GM12878 (cell line): ENCODE measurements at regions of chr6 and their contacts with region 1.

Region 1: DNA sequence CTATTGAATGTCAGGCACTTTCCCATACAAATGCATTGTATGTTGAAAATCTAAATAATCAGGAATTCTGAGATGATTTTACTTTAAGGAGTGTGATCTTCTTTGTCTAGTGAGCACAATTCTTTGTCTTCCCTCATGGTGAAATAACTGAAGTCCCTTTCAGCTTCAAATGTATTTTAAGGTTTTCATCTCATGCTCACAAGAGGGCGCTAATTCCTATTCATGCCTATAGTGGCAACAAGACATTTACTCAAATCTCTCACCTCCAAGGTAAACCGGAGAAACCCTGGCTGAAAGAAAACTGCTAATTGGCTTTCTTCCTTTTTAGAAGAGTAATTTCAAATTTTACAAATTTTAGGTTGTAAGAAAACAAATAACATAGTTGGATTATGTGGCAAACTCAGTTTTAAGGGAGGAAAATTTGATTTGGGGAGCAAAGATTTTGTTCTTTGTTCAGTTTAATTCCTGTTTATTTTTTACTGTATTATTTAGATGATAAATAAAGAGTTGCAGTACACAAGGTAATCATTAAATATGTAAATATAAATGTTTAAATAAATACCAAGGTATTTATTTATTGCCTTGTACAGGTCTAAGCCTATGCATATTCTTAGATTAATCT is 69.1 kb downstream of the SLC35F1 start:
- DNase-seq: no peak
- ATAC-seq: peak; percentile 76
- H3K4me3 ChIP-seq: no peak overlapping the region
- H3K27ac ChIP-seq: no peak overlapping the region
- H3K4me1 ChIP-seq: no peaks in the 10 kb centered on the region
- H3K27me3 ChIP-seq: no peaks in the 10 kb centered on the region
- CTCF ChIP-seq: peak; percentile 61 to 63 (median 62)
- EP300 ChIP-seq: no peak
- POLR2A ChIP-seq: no peak
- RAD21 ChIP-seq: peak; percentile 62

Region 2: GRCh38 chr6:117840541-117840983 is 135.6 kb before region 1 on chr6:
- CTCF ChIA-PET with region 1: no interaction called
- POLR2A ChIA-PET with region 1: no interaction called
- RAD21 ChIA-PET with region 1: interaction called, 3 read pairs
- SMC1A ChIA-PET with region 1: no interaction called
- in situ Hi-C with region 1: no loop called
- intact Hi-C with region 1: loop called (anchors 5 kb)
- DNase-seq: no peak
- ATAC-seq: peak; percentile 70
- H3K4me3 ChIP-seq: no peak overlapping the region
- H3K27ac ChIP-seq: no peak overlapping the region
- H3K4me1 ChIP-seq: no peaks in the 10 kb centered on the region
- H3K27me3 ChIP-seq: no peaks in the 10 kb centered on the region
- CTCF ChIP-seq: peak; percentile 37 to 49 (median 41); a peak in 3 of 6 replicates
- EP300 ChIP-seq: no peak
- POLR2A ChIP-seq: no peak
- RAD21 ChIP-seq: peak; percentile 65

Region 3: DNA sequence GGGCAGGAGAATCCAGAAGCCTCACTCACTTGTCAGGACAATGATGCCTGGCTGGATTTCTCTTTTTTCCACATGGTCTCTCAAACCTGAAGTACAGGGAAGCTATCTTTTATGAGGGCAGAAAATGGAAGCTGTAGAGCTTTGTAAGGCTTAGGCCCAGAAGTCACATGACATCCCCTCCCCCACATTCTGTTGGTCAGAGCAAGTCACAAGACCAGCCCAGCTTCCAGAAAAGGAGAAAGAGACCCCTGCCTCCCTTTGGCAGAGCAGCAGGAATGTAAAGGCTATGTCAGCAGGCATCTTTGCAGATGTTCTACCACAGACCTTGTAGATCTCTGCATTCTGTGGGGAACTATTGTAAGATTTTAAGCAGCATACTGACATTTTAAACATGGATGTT is 176.4 kb after region 1 on chr6:
- CTCF ChIA-PET with region 1: no interaction called
- POLR2A ChIA-PET with region 1: no interaction called
- RAD21 ChIA-PET with region 1: no interaction called
- SMC1A ChIA-PET with region 1: no interaction called
- in situ Hi-C with region 1: no loop called
- intact Hi-C with region 1: no loop called
- DNase-seq: no peak
- ATAC-seq: no peak
- H3K4me3 ChIP-seq: no peak overlapping the region
- H3K27ac ChIP-seq: no peak overlapping the region
- H3K4me1 ChIP-seq: no peaks in the 10 kb centered on the region
- H3K27me3 ChIP-seq: no peaks in the 10 kb centered on the region
- CTCF ChIP-seq: no peak
- EP300 ChIP-seq: no peak
- POLR2A ChIP-seq: no peak
- RAD21 ChIP-seq: no peak

Region 4: DNA sequence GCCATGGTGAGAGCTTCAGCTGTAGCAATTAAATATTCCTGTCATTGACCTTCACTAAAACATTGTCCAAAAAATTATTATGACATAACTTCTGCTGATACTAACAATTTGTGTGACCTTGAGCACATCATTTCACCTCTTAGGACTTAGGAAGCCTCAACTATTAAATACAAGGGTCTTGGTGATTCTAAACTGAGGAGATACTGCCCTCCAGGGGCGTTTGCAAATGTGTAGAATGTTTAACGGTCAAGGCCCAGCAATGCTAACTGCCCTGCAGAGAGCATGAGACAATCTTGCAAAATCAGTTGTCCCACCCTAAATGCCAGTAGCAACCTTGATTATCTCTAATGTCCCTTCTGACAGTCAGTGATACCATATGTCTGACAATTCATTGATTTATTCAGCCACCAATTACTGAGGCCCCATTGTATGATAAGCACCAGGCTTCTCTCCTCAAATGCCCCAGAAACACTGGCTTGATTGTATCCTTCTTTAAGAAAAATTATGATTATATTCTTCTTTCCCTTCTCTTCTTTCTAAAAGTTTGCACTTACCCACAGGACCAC is 287.9 kb after region 1 on chr6:
- CTCF ChIA-PET with region 1: interaction called, 4 read pairs
- POLR2A ChIA-PET with region 1: no interaction called
- RAD21 ChIA-PET with region 1: no interaction called
- SMC1A ChIA-PET with region 1: interaction called, 3 read pairs
- in situ Hi-C with region 1: loop called (anchors 10 kb)
- intact Hi-C with region 1: loop called (anchors 5 kb)
- DNase-seq: no peak
- ATAC-seq: peak; percentile 55
- H3K4me3 ChIP-seq: no peak overlapping the region
- H3K27ac ChIP-seq: no peak overlapping the region
- H3K4me1 ChIP-seq: no peaks in the 10 kb centered on the region
- H3K27me3 ChIP-seq: no peaks in the 10 kb centered on the region
- CTCF ChIP-seq: peak; percentile 21 to 35 (median 30); a peak in 3 of 6 replicates
- EP300 ChIP-seq: no peak
- POLR2A ChIP-seq: no peak
- RAD21 ChIP-seq: peak; percentile 73

Region 5: DNA sequence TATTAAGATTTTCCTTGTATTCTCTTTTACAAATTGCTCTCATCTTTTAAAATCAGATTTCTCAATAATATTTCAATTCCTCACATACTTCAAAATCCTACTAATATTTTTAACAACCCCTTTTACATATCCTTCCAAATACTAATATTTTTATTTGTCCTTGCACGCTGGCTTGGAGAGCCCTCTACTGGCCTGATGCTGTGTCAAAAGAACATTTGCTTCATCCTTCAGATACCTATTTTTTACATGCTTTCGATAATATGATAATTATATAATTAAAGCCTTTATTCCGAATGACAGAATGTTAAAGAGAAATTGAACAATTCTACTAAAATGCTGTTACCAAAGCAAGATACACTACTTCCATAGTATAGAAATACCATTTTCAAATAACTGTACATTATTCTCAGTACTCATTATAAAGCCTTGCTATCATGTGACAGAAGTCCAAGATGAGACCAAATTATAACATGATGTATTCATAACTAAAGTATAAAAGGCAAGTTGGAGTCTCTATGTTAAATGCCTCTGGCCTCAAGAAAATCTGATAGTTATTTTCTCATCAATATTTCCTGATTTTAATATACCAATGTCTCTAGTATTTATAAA is 533.0 kb after region 1 on chr6:
- CTCF ChIA-PET with region 1: no interaction called
- POLR2A ChIA-PET with region 1: no interaction called
- RAD21 ChIA-PET with region 1: interaction called, 3 read pairs
- SMC1A ChIA-PET with region 1: interaction called, 3 read pairs
- in situ Hi-C with region 1: no loop called
- intact Hi-C with region 1: loop called (anchors 2 kb)
- DNase-seq: no peak
- ATAC-seq: 0 out of 3 replicates have a peak, but pooled peaks have one; percentile 34
- H3K4me3 ChIP-seq: no peak overlapping the region
- H3K27ac ChIP-seq: no peak overlapping the region
- H3K4me1 ChIP-seq: no peaks in the 10 kb centered on the region
- H3K27me3 ChIP-seq: no peaks in the 10 kb centered on the region
- CTCF ChIP-seq: peak; percentile 54 to 59 (median 56); a peak in 5 of 6 replicates
- EP300 ChIP-seq: no peak
- POLR2A ChIP-seq: no peak
- RAD21 ChIP-seq: peak; percentile 75

Region 6: GRCh38 chr6:118551063-118552053 is 575.2 kb after region 1 on chr6:
- CTCF ChIA-PET with region 1: interaction called, 10 read pairs
- POLR2A ChIA-PET with region 1: no interaction called
- RAD21 ChIA-PET with region 1: no interaction called
- SMC1A ChIA-PET with region 1: no interaction called
- in situ Hi-C with region 1: no loop called
- intact Hi-C with region 1: loop called (anchors 1 kb)
- DNase-seq: no peak
- ATAC-seq: peak; percentile 93
- H3K4me3 ChIP-seq: no peak overlapping the region
- H3K27ac ChIP-seq: no peak overlapping the region
- H3K4me1 ChIP-seq: no peaks in the 10 kb centered on the region
- H3K27me3 ChIP-seq: no peaks in the 10 kb centered on the region
- CTCF ChIP-seq: peak; percentile 49 to 72 (median 52); a peak in 5 of 6 replicates
- EP300 ChIP-seq: no peak
- POLR2A ChIP-seq: no peak
- RAD21 ChIP-seq: peak; percentile 85

Region 7: GRCh38 chr6:118580585-118581419 is 604.7 kb after region 1 on chr6:
- CTCF ChIA-PET with region 1: interaction called, 7 read pairs
- POLR2A ChIA-PET with region 1: no interaction called
- RAD21 ChIA-PET with region 1: no interaction called
- SMC1A ChIA-PET with region 1: no interaction called
- in situ Hi-C with region 1: no loop called
- intact Hi-C with region 1: loop called (anchors 1 kb)
- DNase-seq: no peak
- ATAC-seq: peak; percentile 85
- H3K4me3 ChIP-seq: no peak overlapping the region
- H3K27ac ChIP-seq: no peak overlapping the region
- H3K4me1 ChIP-seq: no peaks in the 10 kb centered on the region
- H3K27me3 ChIP-seq: no peaks in the 10 kb centered on the region
- CTCF ChIP-seq: peak; percentile 40 to 64 (median 48); a peak in 5 of 6 replicates
- EP300 ChIP-seq: no peak
- POLR2A ChIP-seq: no peak
- RAD21 ChIP-seq: peak; percentile 57

Region 8: GRCh38 chr6:118618679-118619377 is 642.7 kb after region 1 on chr6:
- CTCF ChIA-PET with region 1: interaction called, 3 read pairs
- POLR2A ChIA-PET with region 1: no interaction called
- RAD21 ChIA-PET with region 1: no interaction called
- SMC1A ChIA-PET with region 1: no interaction called
- in situ Hi-C with region 1: no loop called
- intact Hi-C with region 1: loop called (anchors 5 kb)
- DNase-seq: no peak
- ATAC-seq: peak; percentile 98
- H3K4me3 ChIP-seq: no peak overlapping the region
- H3K27ac ChIP-seq: no peak overlapping the region
- H3K4me1 ChIP-seq: no peaks in the 10 kb centered on the region
- H3K27me3 ChIP-seq: no peaks in the 10 kb centered on the region
- CTCF ChIP-seq: peak; percentile 92 to 96 (median 92)
- EP300 ChIP-seq: no peak
- POLR2A ChIP-seq: no peak
- RAD21 ChIP-seq: peak; percentile 88